Transverse colon (tissue), 4 donors: ENCODE measurements at regions of chr2 and their contacts with region 1.

Region 1: GRCh38 chr2:130181325-130181879 is at the start of gene SMPD4:
- DNase-seq: peak; percentile 98
- H3K4me3 ChIP-seq: peak within 1 kb of the TSS; percentile 83 to 98 (median 94)
- H3K27ac ChIP-seq: peak within 1 kb of the TSS; percentile 87 to 97 (median 93)
- H3K4me1 ChIP-seq: peaks cover 15 to 23% (median 22%) of the 10 kb centered on the region in 4 donors
- H3K27me3 ChIP-seq: no peaks in the 10 kb centered on the region
- CTCF ChIP-seq: no peak
- EP300 ChIP-seq: no peak
- POLR2A ChIP-seq: peak; percentile 55
- total RNA-seq, gene SMPD4: 29.1 to 110 (median 52.8) TPM

Region 2: DNA sequence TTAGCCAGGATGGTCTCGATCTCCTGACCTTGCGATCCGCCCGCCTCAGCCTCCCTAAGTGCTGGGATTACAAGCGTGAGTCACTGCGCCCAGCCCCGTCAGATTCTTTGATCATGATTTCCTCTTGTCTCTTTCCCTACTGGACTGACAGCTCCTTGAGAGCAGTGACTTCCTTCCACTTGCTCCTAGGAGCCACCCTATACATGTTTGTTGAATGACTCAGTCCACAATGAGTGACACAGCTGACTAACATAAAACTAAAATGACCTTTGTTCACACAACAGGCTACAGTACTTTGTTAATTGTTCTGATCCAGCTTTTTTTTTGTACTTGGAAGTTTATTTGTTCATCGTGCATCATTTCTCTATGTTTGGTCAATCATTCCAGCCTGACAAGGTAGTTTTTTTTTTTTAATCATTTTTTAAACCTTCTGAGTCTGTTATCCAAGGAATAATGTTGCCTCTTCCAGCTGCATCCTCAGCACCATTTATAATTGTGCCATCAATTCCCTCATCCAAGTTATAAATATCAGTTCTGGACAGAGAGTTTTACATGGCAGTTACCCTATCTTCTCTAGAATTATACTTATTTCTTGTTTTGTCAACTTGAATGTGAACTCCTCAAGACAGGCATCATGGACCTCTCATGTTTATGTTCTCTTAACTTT is 59.8 kb after region 1 on chr2:
- in situ Hi-C with region 1: no loop called
- intact Hi-C with region 1: no loop called
- DNase-seq: peak; percentile 84
- H3K4me3 ChIP-seq: no peak overlapping the region
- H3K27ac ChIP-seq: peak overlapping the region; percentile 69 to 83 (median 81)
- H3K4me1 ChIP-seq: peaks cover 0 to 16% (median 4%) of the 10 kb centered on the region in 4 donors
- H3K27me3 ChIP-seq: no peaks in the 10 kb centered on the region
- CTCF ChIP-seq: no peak
- EP300 ChIP-seq: no peak
- POLR2A ChIP-seq: no peak

Region 3: GRCh38 chr2:131488306-131489205 is 1307.2 kb after region 1 on chr2:
- in situ Hi-C with region 1: loop called in 1 of 4 experiments (anchors 5 kb)
- intact Hi-C with region 1: no loop called
- DNase-seq: no peak
- H3K4me3 ChIP-seq: no peak overlapping the region
- H3K27ac ChIP-seq: no peak overlapping the region
- H3K4me1 ChIP-seq: peaks cover 0 to 13% (median 10%) of the 10 kb centered on the region in 4 donors
- H3K27me3 ChIP-seq: no peaks in the 10 kb centered on the region
- CTCF ChIP-seq: no peak
- EP300 ChIP-seq: no peak
- POLR2A ChIP-seq: no peak